ENCODE measurements at regions of chr4 and their contacts with region 1.

Region 1: DNA sequence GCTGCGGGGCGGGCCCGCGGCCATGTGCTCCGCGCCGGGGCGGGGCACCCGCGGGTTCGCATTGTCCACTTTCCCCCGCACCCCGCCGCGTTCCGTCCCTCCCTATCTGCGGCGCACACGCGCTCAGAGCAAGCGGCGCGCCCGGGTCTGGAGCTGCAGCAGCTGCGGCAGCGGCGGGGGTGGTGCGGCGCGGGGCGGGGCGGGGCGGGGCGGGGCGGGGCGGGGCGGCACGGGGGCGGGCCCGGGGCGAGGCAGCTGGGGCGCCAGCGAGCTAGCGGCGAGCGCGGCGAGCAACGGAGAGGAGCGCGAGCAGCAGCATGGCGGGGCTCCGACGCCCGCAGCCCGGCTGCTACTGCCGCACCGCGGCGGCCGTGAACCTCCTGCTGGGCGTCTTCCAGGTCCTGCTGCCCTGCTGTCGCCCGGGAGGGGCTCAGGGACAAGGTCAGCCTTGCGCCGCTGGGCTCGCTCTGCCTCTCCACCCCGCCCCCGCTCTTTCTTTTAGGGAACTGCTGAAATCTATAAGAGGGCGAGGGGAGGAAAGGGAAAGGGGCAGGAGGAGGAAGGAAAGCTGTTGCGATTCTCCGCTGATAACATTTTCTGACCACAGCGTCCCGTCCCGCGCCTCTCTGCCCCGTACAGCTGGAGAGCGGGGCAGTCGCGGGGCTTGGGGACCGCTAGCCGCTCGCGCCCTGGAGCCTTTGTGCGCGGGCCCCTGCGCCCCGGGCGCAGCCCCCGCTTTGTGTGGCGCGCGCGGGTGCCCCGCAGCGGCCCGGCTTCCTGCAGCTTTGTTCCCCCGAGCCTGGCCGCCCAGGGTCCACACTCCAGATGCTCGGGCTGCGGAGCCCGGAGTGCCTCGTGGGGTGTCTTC is at the start of gene TMEM131L:
- DNase-seq: peak; percentile 90
- ATAC-seq: peak; percentile 93
- total RNA-seq, gene TMEM131L: 14.4 TPM

Region 2: DNA sequence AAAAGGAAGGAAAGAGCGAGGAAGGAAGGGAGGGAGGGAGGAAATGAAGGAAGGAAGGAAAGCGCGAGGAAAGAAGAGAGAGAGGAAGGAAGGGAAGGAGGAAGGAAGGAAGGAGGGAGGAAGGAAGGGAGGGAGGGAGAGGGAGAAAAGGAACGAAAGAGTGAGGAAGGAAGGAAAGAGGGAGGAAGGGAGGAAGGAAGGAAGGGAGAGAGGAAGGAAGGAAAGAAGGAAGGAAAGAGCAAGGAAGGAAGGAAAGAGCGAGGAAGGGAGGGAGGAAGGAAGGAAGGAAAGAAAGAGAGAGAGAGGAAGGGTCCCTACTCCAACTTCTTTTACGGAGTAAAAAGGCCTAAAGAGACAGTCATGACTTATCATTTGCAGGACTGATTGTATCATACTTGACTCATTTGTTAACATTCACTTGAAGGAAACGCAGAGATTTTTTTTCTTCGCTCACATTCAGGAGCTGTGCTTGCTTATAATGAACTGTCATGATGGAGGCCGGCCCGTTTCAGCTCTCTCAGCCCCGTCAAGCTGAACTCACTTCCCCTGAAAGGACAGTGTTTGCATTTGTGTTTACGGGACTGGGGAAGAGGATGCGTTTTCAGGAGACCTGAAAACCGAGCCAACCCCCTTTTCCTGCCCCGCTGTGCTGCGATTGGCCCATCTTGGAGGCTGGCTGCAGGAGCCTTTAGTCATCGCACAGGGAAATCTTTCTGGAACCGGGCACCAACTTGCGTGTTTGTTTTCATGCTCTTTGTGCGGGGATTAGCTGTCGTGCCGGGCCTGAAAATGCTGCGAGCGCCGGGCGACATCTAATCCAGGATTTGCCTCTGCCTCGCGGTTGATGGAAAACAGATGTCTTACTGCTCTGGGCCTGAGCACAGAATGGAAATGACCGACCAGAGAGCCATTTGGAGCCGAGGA is 244.3 kb before region 1 on chr4:
- intact Hi-C with region 1: loop called (anchors 10 kb)
- DNase-seq: peak; percentile 67
- ATAC-seq: peak; percentile 69

Region 3: GRCh38 chr4:153393397-153393796 is 72.9 kb before region 1 on chr4:
- intact Hi-C with region 1: no loop called
- DNase-seq: no peak
- ATAC-seq: no peak